ENCODE measurements at regions of chr22 and their contacts with region 1.

Region 1: DNA sequence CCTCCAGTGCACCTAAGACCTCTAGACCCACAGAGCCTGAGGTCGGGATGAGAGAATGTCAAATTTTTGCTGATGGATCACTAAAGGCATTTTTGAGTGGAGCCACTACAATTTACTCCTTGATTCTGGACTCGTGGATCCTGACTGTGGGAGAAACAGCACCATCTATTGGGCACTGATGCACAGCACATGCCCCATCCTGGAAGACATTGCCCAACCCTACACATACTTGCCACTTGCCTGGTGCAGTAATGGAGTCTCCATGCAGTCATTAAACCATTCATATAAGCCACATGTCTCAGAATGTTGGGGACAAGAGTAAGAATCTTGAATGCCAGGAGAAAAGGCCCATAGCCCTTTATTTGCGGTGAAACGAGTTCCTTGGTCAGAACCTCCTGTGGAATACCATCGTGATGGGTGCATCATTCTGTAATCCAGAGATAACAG is 103.9 kb downstream of the GGTLC2 start:
- DNase-seq: peak; percentile 67
- ATAC-seq: peak; percentile 26
- H3K4me3 ChIP-seq: no peak overlapping the region
- H3K4me3 Mint-ChIP-seq: peak overlapping the region; percentile 26
- H3K27ac ChIP-seq: no peak overlapping the region
- H3K27ac Mint-ChIP-seq: peak overlapping the region; percentile 13
- H3K4me1 ChIP-seq: peaks cover 40 to 47% of the 10 kb centered on the region in 2 donors
- H3K4me1 Mint-ChIP-seq: peaks cover 51% of the 10 kb centered on the region
- H3K27me3 ChIP-seq: no peaks in the 10 kb centered on the region
- H3K27me3 Mint-ChIP-seq: no peaks in the 10 kb centered on the region
- CTCF ChIP-seq: no peak

Region 2: DNA sequence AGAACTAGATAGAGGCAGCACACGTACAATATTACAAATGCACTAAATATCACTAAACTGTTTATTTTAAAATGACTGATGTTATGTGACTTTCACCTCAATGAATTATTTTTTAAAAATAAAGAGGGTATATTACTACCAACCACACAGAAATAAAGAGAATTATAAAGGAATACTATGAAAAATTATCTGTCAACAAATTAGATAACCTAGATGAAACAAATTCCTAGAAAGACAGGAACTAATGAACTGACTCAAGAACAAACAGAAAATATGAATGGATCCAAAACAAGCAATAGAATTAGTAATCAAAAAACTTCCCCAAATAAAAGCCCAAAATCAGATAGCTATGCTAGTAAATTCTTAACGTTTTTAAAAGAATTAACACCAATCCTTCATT is 250.1 kb before region 1 on chr22:
- CTCF ChIA-PET with region 1: no interaction called
- POLR2A ChIA-PET with region 1: no interaction called
- intact Hi-C with region 1: no loop called
- DNase-seq: no peak
- ATAC-seq: no peak
- H3K4me3 ChIP-seq: no peak overlapping the region
- H3K4me3 Mint-ChIP-seq: no peak overlapping the region
- H3K27ac ChIP-seq: no peak overlapping the region
- H3K27ac Mint-ChIP-seq: no peak overlapping the region
- H3K4me1 ChIP-seq: no peaks in the 10 kb centered on the region
- H3K4me1 Mint-ChIP-seq: peaks cover 3% of the 10 kb centered on the region
- H3K27me3 ChIP-seq: no peaks in the 10 kb centered on the region
- H3K27me3 Mint-ChIP-seq: no peaks in the 10 kb centered on the region
- CTCF ChIP-seq: no peak

Region 3: DNA sequence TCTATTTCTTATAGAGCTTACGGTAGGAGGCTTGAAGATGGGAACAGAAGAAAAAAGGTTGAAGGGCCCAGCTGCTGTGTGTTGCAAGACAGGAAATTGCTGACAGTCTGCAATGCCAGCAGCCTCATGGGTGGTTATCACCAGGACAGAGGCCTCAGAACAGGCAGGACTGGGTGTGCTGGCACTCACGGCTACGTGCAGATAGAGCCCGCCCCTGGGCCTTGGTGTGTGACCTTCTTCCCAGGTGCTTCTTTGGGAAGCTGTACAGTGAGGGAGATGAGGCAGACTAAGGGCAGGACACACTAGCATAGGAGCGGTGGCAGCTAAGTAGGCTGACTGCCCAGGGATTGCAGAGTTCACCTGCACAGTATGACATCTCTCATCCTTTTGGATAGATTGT is 201.8 kb before region 1 on chr22:
- CTCF ChIA-PET with region 1: no interaction called
- POLR2A ChIA-PET with region 1: no interaction called
- intact Hi-C with region 1: no loop called
- DNase-seq: no peak
- ATAC-seq: no peak
- H3K4me3 ChIP-seq: no peak overlapping the region
- H3K4me3 Mint-ChIP-seq: no peak overlapping the region
- H3K27ac ChIP-seq: no peak overlapping the region
- H3K27ac Mint-ChIP-seq: no peak overlapping the region
- H3K4me1 ChIP-seq: peaks cover 0 to 12% of the 10 kb centered on the region in 2 donors
- H3K4me1 Mint-ChIP-seq: peaks cover 10% of the 10 kb centered on the region
- H3K27me3 ChIP-seq: no peaks in the 10 kb centered on the region
- H3K27me3 Mint-ChIP-seq: peaks cover 6% of the 10 kb centered on the region
- CTCF ChIP-seq: no peak

Region 4: DNA sequence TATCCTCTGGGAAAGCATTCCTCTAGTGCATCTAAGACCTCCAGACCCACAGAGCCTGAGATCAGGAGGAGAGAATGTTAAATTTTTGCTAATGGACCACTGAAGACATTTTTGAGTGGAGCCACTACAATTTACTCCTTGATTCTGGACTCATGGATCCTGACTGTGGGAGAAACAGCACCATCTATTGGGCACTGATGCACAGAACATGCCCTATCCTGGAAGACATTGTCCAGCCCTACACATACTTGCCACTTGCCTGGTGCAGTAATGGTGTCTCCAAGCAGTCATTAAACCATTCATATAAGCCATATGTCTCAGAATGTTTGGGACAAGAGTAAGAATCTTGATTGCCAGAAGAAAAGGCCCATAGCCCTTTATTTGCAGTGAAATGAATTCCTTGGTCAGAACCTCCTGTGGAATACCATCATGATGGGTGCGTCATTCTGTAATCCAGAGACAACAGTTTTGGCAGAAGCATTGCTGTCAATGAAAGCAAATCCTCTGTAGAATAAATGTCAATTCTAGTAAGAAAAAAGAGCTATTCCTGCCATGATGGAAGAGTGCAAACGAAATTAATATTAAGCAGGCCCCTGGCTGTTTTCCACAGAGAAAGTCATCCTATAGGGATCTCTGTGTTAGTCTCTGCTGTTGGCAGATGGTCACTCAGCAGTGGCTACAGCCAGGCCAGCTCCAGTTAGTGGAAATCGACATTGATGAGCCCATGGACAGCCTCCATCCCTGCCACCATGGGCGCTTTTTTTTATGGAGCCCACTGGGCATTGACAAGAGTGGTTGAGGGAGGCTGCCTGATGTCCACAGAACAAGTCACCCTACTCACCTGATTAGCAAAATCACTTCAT is 60.5 kb before region 1 on chr22:
- CTCF ChIA-PET with region 1: interaction called, 41 read pairs
- POLR2A ChIA-PET with region 1: interaction called, 4 read pairs
- intact Hi-C with region 1: loop called (anchors 1 kb)
- DNase-seq: peak; percentile 36
- ATAC-seq: no peak
- H3K4me3 ChIP-seq: no peak overlapping the region
- H3K4me3 Mint-ChIP-seq: peak overlapping the region; percentile 78
- H3K27ac ChIP-seq: peak overlapping the region; percentile 11 to 52
- H3K27ac Mint-ChIP-seq: peak overlapping the region; percentile 81
- H3K4me1 ChIP-seq: peaks cover 46 to 56% of the 10 kb centered on the region in 2 donors
- H3K4me1 Mint-ChIP-seq: peaks cover 54% of the 10 kb centered on the region
- H3K27me3 ChIP-seq: no peaks in the 10 kb centered on the region
- H3K27me3 Mint-ChIP-seq: no peaks in the 10 kb centered on the region
- CTCF ChIP-seq: peak; percentile 47

Region 5: DNA sequence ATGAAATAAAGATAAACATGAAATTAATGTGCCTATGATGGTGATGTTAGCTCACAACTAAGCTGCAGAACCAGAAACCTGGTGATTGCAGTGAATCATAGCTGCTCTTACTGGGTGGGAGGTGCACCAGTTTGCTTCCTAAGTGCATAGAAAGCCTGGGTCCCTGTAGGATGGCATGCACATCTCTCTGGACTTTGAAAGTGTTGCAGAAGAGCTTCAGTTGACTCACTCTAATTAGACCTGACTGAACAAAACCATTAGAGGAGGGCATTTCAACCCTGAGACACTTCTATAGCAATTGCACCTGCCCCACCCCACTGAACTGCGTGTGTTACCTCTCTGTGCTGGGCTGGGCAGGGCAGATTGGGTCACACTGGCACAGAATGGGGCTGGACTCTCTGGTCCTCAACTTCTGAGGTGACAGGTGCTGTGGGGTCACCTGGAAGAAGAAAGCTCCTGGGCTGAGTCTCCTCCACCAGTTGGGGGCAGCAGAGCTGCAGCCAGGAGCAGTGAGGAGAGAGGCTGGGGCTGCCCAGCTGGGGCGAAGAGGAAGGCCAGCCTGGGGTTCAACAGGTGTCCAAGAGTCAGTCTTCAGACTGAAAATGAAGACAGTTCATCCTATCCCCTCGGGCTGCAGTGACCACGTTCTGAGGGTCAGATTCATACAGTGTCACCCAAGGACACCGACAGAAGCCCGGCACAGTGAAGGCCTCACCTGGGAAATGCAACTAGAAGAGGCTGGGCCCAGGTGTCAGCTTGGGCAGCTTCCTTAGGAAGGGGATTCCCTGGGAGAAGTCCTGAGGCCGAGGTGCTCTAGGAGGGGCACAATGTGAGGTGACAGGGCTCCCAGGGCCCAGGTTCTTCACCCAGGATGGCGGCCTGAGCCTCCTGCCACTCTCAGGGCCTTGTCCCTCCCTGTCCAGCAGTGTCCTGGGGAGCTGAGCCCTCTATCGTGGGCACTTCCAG is 45.8 kb before region 1 on chr22:
- CTCF ChIA-PET with region 1: interaction called, 23 read pairs
- POLR2A ChIA-PET with region 1: no interaction called
- intact Hi-C with region 1: no loop called
- DNase-seq: peak; percentile 36
- ATAC-seq: no peak
- H3K4me3 ChIP-seq: no peak overlapping the region
- H3K4me3 Mint-ChIP-seq: no peak overlapping the region
- H3K27ac ChIP-seq: no peak overlapping the region
- H3K27ac Mint-ChIP-seq: no peak overlapping the region
- H3K4me1 ChIP-seq: peaks cover 11 to 17% of the 10 kb centered on the region in 2 donors
- H3K4me1 Mint-ChIP-seq: peaks cover 21% of the 10 kb centered on the region
- H3K27me3 ChIP-seq: no peaks in the 10 kb centered on the region
- H3K27me3 Mint-ChIP-seq: peaks cover 3% of the 10 kb centered on the region
- CTCF ChIP-seq: peak; percentile 30

Region 6: GRCh38 chr22:22720201-22720723 is 28.1 kb before region 1 on chr22:
- CTCF ChIA-PET with region 1: interaction called, 63 read pairs
- POLR2A ChIA-PET with region 1: interaction called, 3 read pairs
- intact Hi-C with region 1: loop called (anchors 1 kb)
- DNase-seq: peak; percentile 86
- ATAC-seq: peak; percentile 79
- H3K4me3 ChIP-seq: peak overlapping the region in 4 of 5 experiments; percentile 32 to 47 (median 38)
- H3K4me3 Mint-ChIP-seq: peak overlapping the region; percentile 60
- H3K27ac ChIP-seq: peak overlapping the region; percentile 92 to 96
- H3K27ac Mint-ChIP-seq: peak overlapping the region; percentile 95
- H3K4me1 ChIP-seq: peaks cover 43% of the 10 kb centered on the region in 2 donors
- H3K4me1 Mint-ChIP-seq: peaks cover 52% of the 10 kb centered on the region
- H3K27me3 ChIP-seq: no peaks in the 10 kb centered on the region
- H3K27me3 Mint-ChIP-seq: no peaks in the 10 kb centered on the region
- CTCF ChIP-seq: peak; percentile 78

Region 7: DNA sequence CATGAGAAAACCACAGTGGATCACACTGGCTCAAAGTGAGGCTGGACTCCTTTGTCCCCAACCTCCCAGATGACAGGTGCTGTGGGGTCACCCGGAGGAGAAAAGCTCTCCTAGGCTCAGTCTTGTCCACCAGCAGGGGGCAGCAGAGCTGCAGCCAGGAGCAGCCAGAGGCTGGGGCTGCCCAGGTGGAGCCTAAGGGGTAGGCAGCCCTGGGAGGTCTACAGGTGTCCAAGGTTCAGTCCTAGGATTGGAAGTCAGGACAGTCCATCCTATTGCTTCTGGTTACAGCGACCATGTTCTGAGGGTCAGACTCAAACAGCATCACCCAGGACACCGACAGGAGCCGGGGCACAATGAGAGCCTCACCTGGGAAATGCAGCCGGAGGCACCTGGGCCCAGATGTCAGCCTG is 61.7 kb after region 1 on chr22:
- CTCF ChIA-PET with region 1: interaction called, 13 read pairs
- POLR2A ChIA-PET with region 1: no interaction called
- intact Hi-C with region 1: no loop called
- DNase-seq: peak; percentile 84
- ATAC-seq: peak; percentile 76
- H3K4me3 ChIP-seq: peak overlapping the region in 1 of 5 experiments; percentile 1
- H3K4me3 Mint-ChIP-seq: no peak overlapping the region
- H3K27ac ChIP-seq: no peak overlapping the region
- H3K27ac Mint-ChIP-seq: no peak overlapping the region
- H3K4me1 ChIP-seq: peaks cover 9 to 26% of the 10 kb centered on the region in 2 donors
- H3K4me1 Mint-ChIP-seq: peaks cover 24% of the 10 kb centered on the region
- H3K27me3 ChIP-seq: peaks cover 0 to 9% (median 0%) of the 10 kb centered on the region in 4 experiments
- H3K27me3 Mint-ChIP-seq: peaks cover 12% of the 10 kb centered on the region
- CTCF ChIP-seq: peak; percentile 91